A673 (cell line): ENCODE measurements at regions of chr11 and their contacts with region 1.

Region 1: GRCh38 chr11:64652586-64653387 is 61.8 kb downstream of the SLC22A12 start:
- DNase-seq: peak; percentile 83
- H3K4me3 ChIP-seq: no peak overlapping the region
- H3K27ac ChIP-seq: no peak overlapping the region
- H3K4me1 ChIP-seq: no peaks in the 10 kb centered on the region
- H3K27me3 ChIP-seq: no peaks in the 10 kb centered on the region
- CTCF ChIP-seq: peak; percentile 95

Region 2: DNA sequence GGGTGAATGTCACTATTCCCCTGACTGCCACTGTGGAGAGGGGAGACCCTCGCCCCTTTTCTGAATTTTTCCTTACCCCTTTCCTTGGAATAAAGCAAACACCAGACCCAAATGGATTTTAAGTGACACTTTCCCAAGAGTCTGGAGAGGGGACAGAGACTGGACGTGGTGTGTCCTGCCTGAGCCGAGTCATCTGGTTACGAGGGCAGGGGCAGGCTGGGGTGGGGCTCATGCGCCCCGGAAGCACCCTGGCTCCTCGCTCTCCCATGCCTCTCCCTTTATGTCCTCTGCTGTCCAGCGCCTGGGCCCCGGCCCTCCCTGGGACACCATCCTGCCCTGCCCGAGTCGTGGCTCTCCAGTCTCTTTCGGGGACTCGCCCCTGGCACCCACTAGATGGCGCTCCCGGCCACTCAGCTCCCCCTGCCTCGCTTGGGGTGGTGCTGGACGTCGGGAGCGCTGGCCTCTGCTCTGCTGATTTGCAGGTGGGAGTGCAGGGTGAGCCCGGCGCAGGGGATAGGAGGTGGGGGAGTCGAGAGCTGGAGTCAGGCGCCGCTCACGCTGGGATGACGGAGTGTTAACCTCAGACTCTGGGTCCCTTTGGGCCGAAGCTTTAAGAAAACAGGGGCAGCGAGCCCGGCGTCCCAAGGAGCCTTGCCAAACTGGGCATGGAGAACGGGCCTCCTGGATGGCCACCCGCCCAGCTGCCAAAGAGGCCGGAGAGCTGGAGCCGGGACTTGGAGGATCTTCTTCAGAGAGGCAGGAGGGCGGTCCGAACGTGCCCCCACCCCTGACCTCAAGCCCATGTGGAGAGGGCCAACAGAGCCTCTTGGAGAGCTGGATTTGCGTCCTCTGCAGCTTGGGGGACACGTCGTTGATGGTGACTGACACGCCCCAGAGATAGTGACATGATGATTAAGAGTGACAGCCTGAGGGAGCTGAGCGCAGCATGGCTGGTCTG is 203.9 kb before region 1 on chr11:
- CTCF ChIA-PET with region 1: interaction called, 33 read pairs
- POLR2A ChIA-PET with region 1: no interaction called
- intact Hi-C with region 1: loop called (anchors 1 kb)
- DNase-seq: peak; percentile 85
- H3K4me3 ChIP-seq: peak overlapping the region; percentile 39
- H3K27ac ChIP-seq: no peak overlapping the region
- H3K4me1 ChIP-seq: peaks cover 16% of the 10 kb centered on the region
- H3K27me3 ChIP-seq: no peaks in the 10 kb centered on the region
- CTCF ChIP-seq: peak; percentile 96

Region 3: DNA sequence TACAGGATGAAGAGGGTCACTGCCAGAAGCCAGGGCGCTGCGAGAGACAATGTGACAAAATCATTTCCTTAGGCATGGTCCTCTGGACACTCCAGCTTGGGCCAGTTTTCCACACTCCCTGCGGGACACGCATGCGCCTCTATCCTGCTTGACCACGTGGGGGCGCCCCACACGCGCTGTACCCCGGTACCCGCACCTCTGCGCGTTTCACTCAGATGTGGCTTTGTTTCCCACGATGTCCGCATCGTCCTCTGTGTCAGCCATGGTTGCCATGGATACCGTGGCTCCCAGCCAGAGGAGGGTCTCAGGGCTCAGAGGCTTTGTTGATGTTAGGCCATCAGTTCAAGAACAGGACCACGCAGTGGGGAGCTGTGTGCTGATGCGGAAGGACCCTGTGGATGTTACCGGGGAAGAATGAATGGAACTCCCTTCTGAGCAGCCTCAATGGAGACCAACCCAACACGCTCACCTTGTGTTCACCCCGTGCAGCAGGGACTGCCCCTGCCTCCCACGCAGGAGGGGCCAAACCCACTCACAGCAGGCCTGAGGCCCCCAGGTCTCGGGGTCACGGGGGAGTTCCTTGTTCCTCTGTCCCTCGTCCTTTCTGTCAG is 162.9 kb before region 1 on chr11:
- CTCF ChIA-PET with region 1: interaction called, 4 read pairs
- POLR2A ChIA-PET with region 1: no interaction called
- intact Hi-C with region 1: loop called (anchors 5 kb)
- DNase-seq: peak; percentile 72
- H3K4me3 ChIP-seq: no peak overlapping the region
- H3K27ac ChIP-seq: no peak overlapping the region
- H3K4me1 ChIP-seq: no peaks in the 10 kb centered on the region
- H3K27me3 ChIP-seq: peaks cover 51% of the 10 kb centered on the region
- CTCF ChIP-seq: peak; percentile 98

Region 4: GRCh38 chr11:64553551-64554201 is 99.1 kb before region 1 on chr11:
- CTCF ChIA-PET with region 1: interaction called, 3 read pairs
- POLR2A ChIA-PET with region 1: no interaction called
- intact Hi-C with region 1: loop called (anchors 1 kb)
- DNase-seq: peak; percentile 52
- H3K4me3 ChIP-seq: no peak overlapping the region
- H3K27ac ChIP-seq: no peak overlapping the region
- H3K4me1 ChIP-seq: no peaks in the 10 kb centered on the region
- H3K27me3 ChIP-seq: no peaks in the 10 kb centered on the region
- CTCF ChIP-seq: peak; percentile 99

Region 5: GRCh38 chr11:64720640-64721358 is 68.0 kb after region 1 on chr11:
- CTCF ChIA-PET with region 1: no interaction called
- POLR2A ChIA-PET with region 1: no interaction called
- intact Hi-C with region 1: loop called (anchors 2 kb)
- DNase-seq: no peak
- H3K4me3 ChIP-seq: no peak overlapping the region
- H3K27ac ChIP-seq: no peak overlapping the region
- H3K4me1 ChIP-seq: peaks cover 8% of the 10 kb centered on the region
- H3K27me3 ChIP-seq: peaks cover 67% of the 10 kb centered on the region
- CTCF ChIP-seq: no peak

Region 6: DNA sequence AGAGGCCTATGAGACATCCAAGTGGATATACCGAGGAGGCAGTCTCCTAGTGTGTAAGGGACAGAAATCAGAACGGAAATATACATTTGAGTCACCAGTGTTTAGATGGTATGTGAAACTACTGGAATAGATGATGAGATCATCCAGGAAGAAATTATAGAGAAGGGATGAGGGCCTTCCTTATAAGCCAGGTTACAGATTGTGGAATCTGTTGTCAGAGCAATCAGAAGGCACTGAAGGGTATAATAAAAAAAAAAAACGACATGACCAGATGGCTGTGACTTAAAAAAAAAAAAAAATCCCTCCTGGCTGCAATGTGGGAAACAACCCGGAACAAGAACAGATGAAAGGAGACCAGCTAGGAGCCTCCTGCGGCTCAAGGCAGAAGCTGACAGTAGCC is 316.4 kb after region 1 on chr11:
- CTCF ChIA-PET with region 1: no interaction called
- POLR2A ChIA-PET with region 1: no interaction called
- intact Hi-C with region 1: no loop called
- DNase-seq: peak; percentile 39
- H3K4me3 ChIP-seq: no peak overlapping the region
- H3K27ac ChIP-seq: no peak overlapping the region
- H3K4me1 ChIP-seq: no peaks in the 10 kb centered on the region
- H3K27me3 ChIP-seq: no peaks in the 10 kb centered on the region
- CTCF ChIP-seq: no peak